ENCODE measurements at regions of chr21 and their contacts with region 1.

Region 1: DNA sequence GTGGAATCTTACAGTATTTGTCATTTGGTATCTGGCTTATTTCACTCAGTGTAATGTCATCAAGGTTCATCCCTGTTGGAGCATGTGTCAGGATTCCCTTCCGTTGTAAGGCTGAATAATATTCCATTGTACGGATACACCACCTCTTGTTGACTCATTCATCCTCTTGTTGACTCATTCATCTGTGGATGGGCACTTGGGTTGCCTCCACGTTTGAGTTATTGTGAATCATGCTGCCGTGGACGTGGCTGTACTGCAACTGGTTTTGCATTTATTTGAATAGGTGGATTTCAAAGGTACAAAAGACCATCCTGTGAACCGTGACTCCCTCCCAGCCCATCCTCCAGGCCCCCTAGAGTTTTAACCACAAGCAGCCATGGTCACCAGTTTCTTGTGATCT is 11.9 kb upstream of the TCP10L start:
- DNase-seq: peak; percentile 47
- H3K4me3 ChIP-seq: no peak overlapping the region
- H3K27ac ChIP-seq: peak overlapping the region; percentile 61
- H3K27me3 ChIP-seq: no peaks in the 10 kb centered on the region
- CTCF ChIP-seq: no peak

Region 2: GRCh38 chr21:32329331-32329730 is 267.9 kb before region 1 on chr21:
- CTCF ChIA-PET with region 1: interaction called, 15 read pairs
- POLR2A ChIA-PET with region 1: interaction called, 3 read pairs
- DNase-seq: no peak
- H3K4me3 ChIP-seq: no peak overlapping the region
- H3K27ac ChIP-seq: peak overlapping the region; percentile 81
- H3K27me3 ChIP-seq: no peaks in the 10 kb centered on the region
- CTCF ChIP-seq: no peak

Region 3: DNA sequence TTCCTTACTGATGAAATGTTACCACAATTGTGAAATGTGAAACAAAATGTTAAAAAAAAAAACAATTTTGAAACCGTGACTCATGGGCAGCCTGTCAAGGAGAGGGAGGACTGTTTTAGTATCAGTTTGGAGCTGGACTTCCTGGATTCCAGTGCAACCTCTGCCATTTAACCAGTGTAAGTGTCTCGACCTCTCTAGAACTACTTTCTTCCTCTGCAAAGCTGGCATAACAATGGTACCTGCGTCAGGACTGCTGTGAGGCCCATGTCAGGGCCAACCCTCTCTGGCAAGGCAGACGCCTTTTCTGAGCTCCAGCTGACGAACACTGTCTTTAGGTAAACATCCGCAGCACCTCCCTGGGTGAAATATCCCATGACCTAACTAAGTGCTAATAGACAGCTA is 225.3 kb before region 1 on chr21:
- CTCF ChIA-PET with region 1: interaction called, 55 read pairs
- POLR2A ChIA-PET with region 1: no interaction called
- DNase-seq: peak; percentile 52
- H3K4me3 ChIP-seq: no peak overlapping the region
- H3K27ac ChIP-seq: peak overlapping the region; percentile 89
- H3K27me3 ChIP-seq: no peaks in the 10 kb centered on the region
- CTCF ChIP-seq: no peak

Region 4: GRCh38 chr21:32412162-32413014 is 184.8 kb before region 1 on chr21 and contains the start of gene EVA1C:
- CTCF ChIA-PET with region 1: interaction called, 38 read pairs
- POLR2A ChIA-PET with region 1: no interaction called
- DNase-seq: no peak
- H3K4me3 ChIP-seq: peak within 1 kb of the TSS; percentile 66
- H3K27ac ChIP-seq: peak within 1 kb of the TSS; percentile 21
- H3K27me3 ChIP-seq: no peaks in the 10 kb centered on the region
- CTCF ChIP-seq: no peak
- polyA plus RNA-seq, gene EVA1C: 2.8 and 5.7 TPM in 2 replicates

Region 5: DNA sequence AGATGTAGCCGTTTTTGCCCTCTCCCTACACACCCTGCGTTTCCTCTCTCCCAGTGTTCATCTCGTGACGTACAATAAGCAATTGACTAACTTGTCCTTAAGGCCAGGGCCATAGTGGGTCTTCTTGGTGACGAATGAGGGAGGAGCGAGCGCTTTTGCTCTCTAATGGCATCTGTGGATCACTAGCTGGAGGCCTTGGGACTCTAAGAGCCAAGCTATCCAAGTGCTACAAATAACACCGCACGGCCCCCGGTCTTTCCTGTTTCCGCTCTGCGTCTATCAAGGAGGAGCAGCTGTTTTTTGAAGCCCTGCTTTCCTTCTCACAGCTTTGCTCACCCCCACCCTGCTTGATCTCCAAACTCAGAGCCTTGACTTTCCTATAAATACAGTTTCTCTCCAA is 159.5 kb before region 1 on chr21:
- CTCF ChIA-PET with region 1: no interaction called
- POLR2A ChIA-PET with region 1: no interaction called
- DNase-seq: no peak
- H3K4me3 ChIP-seq: no peak overlapping the region
- H3K27ac ChIP-seq: no peak overlapping the region
- H3K27me3 ChIP-seq: no peaks in the 10 kb centered on the region
- CTCF ChIP-seq: no peak

Region 6: GRCh38 chr21:32457360-32457840 is 139.8 kb before region 1 on chr21:
- CTCF ChIA-PET with region 1: interaction called, 18 read pairs
- POLR2A ChIA-PET with region 1: no interaction called
- DNase-seq: no peak
- H3K4me3 ChIP-seq: no peak overlapping the region
- H3K27ac ChIP-seq: peak overlapping the region; percentile 83
- H3K27me3 ChIP-seq: no peaks in the 10 kb centered on the region
- CTCF ChIP-seq: 0 out of 2 replicates have a peak, but pooled peaks have one; percentile 11

Region 7: GRCh38 chr21:32612075-32612998 is 15.1 kb after region 1 on chr21 and contains the start of gene CFAP298:
- CTCF ChIA-PET with region 1: interaction called, 55 read pairs
- POLR2A ChIA-PET with region 1: interaction called, 7 read pairs
- DNase-seq: peak; percentile 90
- H3K4me3 ChIP-seq: peak within 1 kb of the TSS; percentile 92
- H3K27ac ChIP-seq: peak within 1 kb of the TSS; percentile 98
- H3K27me3 ChIP-seq: no peaks in the 10 kb centered on the region
- CTCF ChIP-seq: no peak
- polyA plus RNA-seq, gene CFAP298: 18.6 and 21.2 TPM in 2 replicates